ENCODE measurements at regions of chr4 and their contacts with region 1.

Region 1: GRCh38 chr4:26719954-26720552 is 136.2 kb downstream of the TBC1D19 start:
- DNase-seq: no peak
- ATAC-seq: no peak
- H3K4me3 ChIP-seq: no peak overlapping the region
- H3K27ac ChIP-seq: no peak overlapping the region
- H3K4me1 ChIP-seq: no peaks in the 10 kb centered on the region
- H3K27me3 ChIP-seq: no peaks in the 10 kb centered on the region
- CTCF ChIP-seq: peak in 2 of 3 experiments; percentile 34 to 40; a peak in 3 of 6 replicates
- EP300 ChIP-seq: no peak
- POLR2A ChIP-seq: no peak
- RAD21 ChIP-seq: peak; percentile 78

Region 2: GRCh38 chr4:26459054-26459755 is 260.8 kb before region 1 on chr4:
- CTCF ChIA-PET with region 1: interaction called, 8 read pairs
- POLR2A ChIA-PET with region 1: no interaction called
- RAD21 ChIA-PET with region 1: interaction called, 3 read pairs
- SMC1A ChIA-PET with region 1: interaction called, 3 read pairs
- in situ Hi-C with region 1: no loop called
- intact Hi-C with region 1: loop called (anchors 2 kb)
- DNase-seq: peak; percentile 26
- ATAC-seq: peak; percentile 90
- H3K4me3 ChIP-seq: no peak overlapping the region
- H3K27ac ChIP-seq: no peak overlapping the region
- H3K4me1 ChIP-seq: no peaks in the 10 kb centered on the region; the same call in 1 of the 2 replicates
- H3K27me3 ChIP-seq: no peaks in the 10 kb centered on the region
- CTCF ChIP-seq: peak; percentile 53 to 65 (median 59); a peak in 5 of 6 replicates
- EP300 ChIP-seq: no peak
- POLR2A ChIP-seq: no peak
- RAD21 ChIP-seq: peak; percentile 76

Region 3: GRCh38 chr4:26731351-26732035 is 11.4 kb after region 1 on chr4:
- CTCF ChIA-PET with region 1: interaction called, 3 read pairs
- POLR2A ChIA-PET with region 1: no interaction called
- RAD21 ChIA-PET with region 1: interaction called, 3 read pairs
- SMC1A ChIA-PET with region 1: interaction called, 16 read pairs
- in situ Hi-C with region 1: no loop called
- intact Hi-C with region 1: no loop called
- DNase-seq: peak; percentile 13
- ATAC-seq: peak; percentile 82
- H3K4me3 ChIP-seq: no peak overlapping the region
- H3K27ac ChIP-seq: no peak overlapping the region
- H3K4me1 ChIP-seq: no peaks in the 10 kb centered on the region; the same call in 1 of the 2 replicates
- H3K27me3 ChIP-seq: no peaks in the 10 kb centered on the region
- CTCF ChIP-seq: no peak
- EP300 ChIP-seq: no peak
- POLR2A ChIP-seq: no peak
- RAD21 ChIP-seq: no peak

Region 4: DNA sequence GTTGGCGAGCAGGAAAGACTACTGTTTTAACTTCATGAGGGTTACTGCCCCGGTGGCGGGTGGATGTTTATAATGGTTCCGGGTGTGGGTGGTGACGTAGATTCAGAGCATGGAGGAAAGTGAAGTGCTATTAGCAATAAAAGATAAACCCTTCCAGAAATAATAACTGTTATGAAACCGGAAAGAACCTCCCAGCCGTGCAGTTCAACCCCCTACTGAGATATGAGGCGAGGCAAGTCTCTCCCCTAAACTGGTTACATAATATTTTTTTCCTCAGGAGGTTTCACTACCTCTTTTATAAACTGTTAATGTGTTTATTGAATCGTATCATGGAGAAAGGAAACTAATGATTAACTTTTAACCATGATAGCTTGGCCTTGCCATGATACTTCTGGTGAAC is 106.7 kb after region 1 on chr4:
- CTCF ChIA-PET with region 1: interaction called, 3 read pairs
- POLR2A ChIA-PET with region 1: no interaction called
- RAD21 ChIA-PET with region 1: no interaction called
- SMC1A ChIA-PET with region 1: interaction called, 10 read pairs
- in situ Hi-C with region 1: no loop called
- intact Hi-C with region 1: no loop called
- DNase-seq: peak; percentile 72
- ATAC-seq: peak; percentile 94
- H3K4me3 ChIP-seq: 0 out of 2 replicates have a peak overlapping the region, but pooled peaks have one; percentile 31
- H3K27ac ChIP-seq: peak overlapping the region; percentile 20; the same call in 1 of the 2 replicates
- H3K4me1 ChIP-seq: peaks cover 21% of the 10 kb centered on the region
- H3K27me3 ChIP-seq: no peaks in the 10 kb centered on the region
- CTCF ChIP-seq: no peak
- EP300 ChIP-seq: peak; percentile 91 to 93
- POLR2A ChIP-seq: no peak
- RAD21 ChIP-seq: no peak